Tibial artery (tissue), 4 donors: ENCODE measurements at regions of chr13 and their contacts with region 1.

Region 1: GRCh38 chr13:49792550-49793324 is at the start of gene KPNA3:
- DNase-seq: peak; percentile 96 to 98
- H3K4me3 ChIP-seq: peak within 1 kb of the TSS; percentile 65 to 89
- H3K27ac ChIP-seq: peak within 1 kb of the TSS; percentile 80 to 89
- H3K4me1 ChIP-seq: peaks cover 0 to 32% (median 15%) of the 10 kb centered on the region in 4 donors
- H3K27me3 ChIP-seq: peaks cover 0 to 5% of the 10 kb centered on the region in 2 donors
- CTCF ChIP-seq: peak in 1 of 2 experiments; percentile 8

Region 2: DNA sequence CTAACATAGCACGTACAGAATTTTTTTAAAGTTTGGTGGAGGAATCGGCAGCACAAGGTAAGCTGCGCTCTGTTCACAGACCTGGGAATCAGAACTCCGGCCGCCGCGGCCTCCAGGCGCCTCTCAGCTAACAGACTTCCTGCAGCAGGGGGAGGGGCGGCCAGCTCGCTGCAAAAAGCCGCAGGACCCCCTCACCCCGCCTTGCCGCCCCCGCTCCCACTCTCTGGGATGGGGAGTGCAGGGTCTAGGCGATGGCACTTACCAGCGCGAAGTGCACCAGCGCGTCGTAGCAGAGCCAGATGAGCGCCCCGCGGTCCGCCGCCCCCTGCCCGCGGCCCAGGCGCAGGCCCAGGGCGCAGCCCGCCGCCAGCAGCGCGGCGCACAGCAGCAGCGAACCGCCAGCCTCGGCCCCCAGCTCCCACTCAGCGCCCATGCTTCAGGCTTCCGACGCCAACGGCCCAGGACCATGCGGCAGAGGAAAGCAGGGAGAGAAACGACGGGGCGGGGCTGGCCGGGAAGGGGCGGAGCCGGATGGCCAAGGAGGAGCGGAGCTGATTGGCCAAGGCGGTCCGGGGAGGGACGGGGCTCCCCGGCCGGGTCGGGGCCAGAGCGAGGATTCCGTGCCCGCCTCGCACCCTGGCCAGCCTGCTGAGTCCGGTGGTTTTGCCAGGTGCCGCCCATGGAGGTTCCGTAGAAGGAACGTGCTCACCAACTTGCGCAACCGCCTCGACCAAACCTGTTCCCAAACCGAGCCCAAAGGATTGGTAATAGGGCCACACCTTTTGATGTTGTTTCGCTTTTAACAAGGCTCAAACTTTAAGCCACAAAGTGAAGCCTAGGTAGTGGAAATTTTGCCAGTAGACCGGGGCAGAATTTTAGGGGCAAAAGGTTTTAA is 101.5 kb before region 1 on chr13 and contains the start of gene EBPL:
- intact Hi-C with region 1: loop called (anchors 5 kb)
- DNase-seq: peak; percentile 92 to 95
- H3K4me3 ChIP-seq: peak within 1 kb of the TSS; percentile 67 to 84
- H3K27ac ChIP-seq: peak within 1 kb of the TSS; percentile 64 to 76
- H3K4me1 ChIP-seq: peaks cover 0 to 7% (median 3%) of the 10 kb centered on the region in 4 donors
- H3K27me3 ChIP-seq: no peaks in the 10 kb centered on the region
- CTCF ChIP-seq: no peak

Region 3: DNA sequence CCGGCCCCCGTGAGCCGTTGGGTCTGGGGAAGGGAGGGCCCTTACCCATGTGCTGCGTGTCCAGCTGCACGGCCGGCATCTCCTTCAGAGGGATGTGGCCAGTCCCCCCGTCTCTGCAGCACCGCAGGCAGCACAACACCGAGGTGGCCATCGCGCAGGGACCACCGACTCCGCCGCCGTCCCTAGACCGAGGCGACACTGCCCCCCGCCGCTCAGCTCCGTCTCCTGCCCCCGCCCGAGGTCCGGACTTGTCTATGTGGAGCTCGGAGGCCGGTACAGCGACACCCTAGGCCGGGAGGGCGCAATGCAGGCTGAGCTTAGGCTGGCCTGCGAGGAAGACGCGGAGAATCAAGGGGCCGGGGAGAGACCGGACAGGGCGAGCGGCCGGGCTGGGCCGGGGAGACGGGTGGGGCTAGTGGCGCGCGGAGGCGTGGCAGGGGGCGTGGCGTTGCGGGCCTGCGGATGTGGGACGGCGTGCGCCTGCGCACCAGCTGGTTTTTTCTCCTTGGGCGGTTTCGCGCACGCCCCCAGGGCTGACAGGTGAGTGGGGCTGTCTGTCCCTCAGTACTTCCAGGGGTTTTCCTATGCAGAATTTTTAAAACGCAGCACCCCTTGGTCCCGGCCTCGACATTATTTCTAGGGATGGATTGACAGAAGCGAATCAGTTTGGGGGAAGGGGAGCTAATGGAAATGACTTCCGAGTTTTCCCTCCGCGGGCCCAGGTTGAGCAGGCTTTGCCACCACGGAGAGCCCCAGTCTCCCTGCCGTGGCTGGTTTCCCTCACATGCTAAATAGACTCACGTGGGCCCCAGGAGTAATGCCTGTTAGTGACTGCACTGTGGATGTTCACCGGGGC is 143.6 kb after region 1 on chr13 and contains the start of gene SPRYD7:
- intact Hi-C with region 1: loop called (anchors 5 kb)
- DNase-seq: peak; percentile 97 to 99
- H3K4me3 ChIP-seq: peak within 1 kb of the TSS; percentile 76 to 94
- H3K27ac ChIP-seq: peak within 1 kb of the TSS; percentile 78 to 91
- H3K4me1 ChIP-seq: peaks cover 0 to 42% (median 21%) of the 10 kb centered on the region in 4 donors
- H3K27me3 ChIP-seq: no peaks in the 10 kb centered on the region
- CTCF ChIP-seq: peak; percentile 92

Region 4: GRCh38 chr13:49976314-49977258 is 183.8 kb after region 1 on chr13:
- intact Hi-C with region 1: no loop called
- DNase-seq: peak; percentile 60 to 70
- H3K4me3 ChIP-seq: no peak overlapping the region
- H3K27ac ChIP-seq: no peak overlapping the region
- H3K4me1 ChIP-seq: no peaks in the 10 kb centered on the region
- H3K27me3 ChIP-seq: no peaks in the 10 kb centered on the region
- CTCF ChIP-seq: peak; percentile 81 to 86

Region 5: GRCh38 chr13:50123862-50124536 is 331.3 kb after region 1 on chr13:
- intact Hi-C with region 1: loop called (anchors 10 kb)
- DNase-seq: peak; percentile 90 to 95
- H3K4me3 ChIP-seq: peak overlapping the region; percentile 95 to 96
- H3K27ac ChIP-seq: peak overlapping the region; percentile 100
- H3K4me1 ChIP-seq: peaks cover 0 to 35% (median 28%) of the 10 kb centered on the region in 4 donors
- H3K27me3 ChIP-seq: no peaks in the 10 kb centered on the region
- CTCF ChIP-seq: no peak